GM12878 (cell line): ENCODE measurements at regions of chr2 and their contacts with region 1.

Region 1: DNA sequence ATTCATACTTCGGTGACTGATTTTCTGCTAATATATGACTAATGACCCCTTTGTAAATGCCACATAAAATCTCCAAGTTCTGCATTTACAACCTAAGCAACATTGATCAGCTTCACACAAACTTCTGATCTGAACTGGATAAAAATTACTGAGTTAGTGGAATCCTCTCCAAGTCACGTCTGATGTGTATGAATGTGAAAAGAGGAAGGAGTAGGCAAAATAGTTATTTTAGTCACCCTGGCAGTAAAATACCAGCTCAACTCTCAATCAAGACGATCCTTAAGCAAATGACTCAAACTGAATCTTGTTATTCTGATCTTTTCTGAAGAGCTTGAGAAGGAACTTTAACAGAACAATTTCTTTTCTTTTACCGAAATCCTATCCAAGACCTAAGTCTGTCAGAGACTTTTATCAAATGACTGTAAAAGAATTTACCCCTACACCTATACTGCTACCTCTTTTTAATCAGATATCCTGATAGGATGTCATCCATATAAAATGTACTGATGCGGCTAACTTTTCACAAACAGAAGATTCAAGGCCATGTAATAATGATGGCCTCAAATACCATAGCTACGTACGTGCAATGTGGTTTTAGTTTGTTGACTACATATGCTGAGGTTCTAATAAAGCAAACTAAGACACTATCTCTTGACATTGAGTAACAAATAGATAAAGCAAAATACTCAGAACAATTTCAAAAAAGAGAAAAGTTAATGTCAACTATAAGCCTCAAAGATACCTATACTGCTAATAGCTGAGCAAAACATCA is 23.7 kb downstream of the CUL3 start:
- DNase-seq: peak; percentile 50
- ATAC-seq: peak; percentile 85
- H3K4me3 ChIP-seq: peak overlapping the region; percentile 29
- H3K27ac ChIP-seq: peak overlapping the region; percentile 13
- H3K4me1 ChIP-seq: peaks cover 12% of the 10 kb centered on the region
- H3K27me3 ChIP-seq: no peaks in the 10 kb centered on the region
- CTCF ChIP-seq: no peak
- EP300 ChIP-seq: no peak
- POLR2A ChIP-seq: no peak
- RAD21 ChIP-seq: no peak

Region 2: GRCh38 chr2:224545884-224546644 is 15.4 kb before region 1 on chr2:
- CTCF ChIA-PET with region 1: interaction called, 5 read pairs
- POLR2A ChIA-PET with region 1: interaction called, 7 read pairs
- RAD21 ChIA-PET with region 1: interaction called, 5 read pairs
- SMC1A ChIA-PET with region 1: interaction called, 47 read pairs
- in situ Hi-C with region 1: no loop called
- intact Hi-C with region 1: no loop called
- DNase-seq: no peak
- ATAC-seq: peak; percentile 83
- H3K4me3 ChIP-seq: no peak overlapping the region
- H3K27ac ChIP-seq: no peak overlapping the region; the same call in 1 of the 2 replicates
- H3K4me1 ChIP-seq: peaks cover 3% of the 10 kb centered on the region; the same call in 1 of the 2 replicates
- H3K27me3 ChIP-seq: no peaks in the 10 kb centered on the region
- CTCF ChIP-seq: no peak
- EP300 ChIP-seq: peak in 1 of 2 experiments; percentile 26; a peak in 1 of 4 replicates
- POLR2A ChIP-seq: no peak
- RAD21 ChIP-seq: no peak

Region 3: GRCh38 chr2:224576088-224576715 is 14.8 kb after region 1 on chr2:
- CTCF ChIA-PET with region 1: interaction called, 8 read pairs
- POLR2A ChIA-PET with region 1: interaction called, 11 read pairs
- RAD21 ChIA-PET with region 1: interaction called, 14 read pairs
- SMC1A ChIA-PET with region 1: interaction called, 95 read pairs
- in situ Hi-C with region 1: no loop called
- intact Hi-C with region 1: no loop called
- DNase-seq: peak; percentile 43
- ATAC-seq: peak; percentile 68
- H3K4me3 ChIP-seq: peak overlapping the region; percentile 53
- H3K27ac ChIP-seq: peak overlapping the region; percentile 8
- H3K4me1 ChIP-seq: peaks cover 22% of the 10 kb centered on the region
- H3K27me3 ChIP-seq: no peaks in the 10 kb centered on the region
- CTCF ChIP-seq: no peak
- EP300 ChIP-seq: no peak
- POLR2A ChIP-seq: no peak
- RAD21 ChIP-seq: no peak

Region 4: GRCh38 chr2:224585205-224586088 is 24.0 kb after region 1 on chr2 and contains the start of gene CUL3:
- CTCF ChIA-PET with region 1: interaction called, 7 read pairs
- POLR2A ChIA-PET with region 1: interaction called, 4 read pairs
- RAD21 ChIA-PET with region 1: interaction called, 11 read pairs
- SMC1A ChIA-PET with region 1: interaction called, 95 read pairs
- in situ Hi-C with region 1: no loop called
- intact Hi-C with region 1: no loop called
- DNase-seq: peak; percentile 90
- ATAC-seq: peak; percentile 88
- H3K4me3 ChIP-seq: peak within 1 kb of the TSS; percentile 96
- H3K27ac ChIP-seq: peak within 1 kb of the TSS; percentile 88
- H3K4me1 ChIP-seq: no peaks in the 10 kb centered on the region
- H3K27me3 ChIP-seq: no peaks in the 10 kb centered on the region
- CTCF ChIP-seq: no peak
- EP300 ChIP-seq: 0 out of 4 replicates have a peak, but pooled peaks of 1 of the 2 experiments have one; percentile 10
- POLR2A ChIP-seq: peak; percentile 90
- RAD21 ChIP-seq: no peak
- polyA plus RNA-seq, gene CUL3: 49.0 to 71.9 TPM